ENCODE measurements at regions of chr16 and their contacts with region 1.

Region 1: DNA sequence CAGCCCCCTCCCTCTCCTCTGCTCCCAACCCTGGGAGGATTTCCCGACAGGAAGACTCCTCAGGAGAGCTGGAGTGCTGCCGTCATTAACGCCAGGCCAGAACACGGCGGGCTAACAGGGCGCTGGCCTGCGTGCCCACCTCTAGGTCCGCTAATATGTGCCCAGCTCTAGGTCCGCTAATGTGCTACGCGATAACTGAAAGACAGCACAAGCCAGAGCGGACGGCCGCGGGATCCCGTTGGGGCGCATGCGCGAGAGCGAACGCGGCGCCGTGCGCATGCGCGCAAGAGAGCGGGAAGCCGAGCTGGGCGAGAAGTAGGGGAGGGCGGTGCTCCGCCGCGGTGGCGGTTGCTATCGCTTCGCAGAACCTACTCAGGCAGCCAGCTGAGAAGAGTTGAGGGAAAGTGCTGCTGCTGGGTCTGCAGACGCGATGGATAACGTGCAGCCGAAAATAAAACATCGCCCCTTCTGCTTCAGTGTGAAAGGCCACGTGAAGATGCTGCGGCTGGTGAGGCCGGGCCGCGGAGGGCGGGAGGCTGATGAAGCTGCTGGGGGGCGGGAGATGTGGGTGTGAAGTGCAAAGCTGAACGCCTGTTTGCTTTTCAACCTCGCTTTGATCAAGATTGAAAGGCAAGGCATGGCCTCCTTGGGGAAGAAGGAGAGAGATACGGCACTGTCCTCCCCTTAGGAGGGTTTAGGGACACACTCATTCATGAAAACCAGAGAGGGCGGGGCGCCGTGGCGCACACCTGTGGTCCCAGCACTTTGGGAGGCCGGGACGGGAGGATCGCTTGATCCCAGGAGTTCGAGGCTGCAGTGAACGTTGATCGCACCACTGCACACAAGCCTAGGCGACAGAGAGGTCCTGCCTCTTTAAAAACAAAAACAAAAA is at the start of gene CKLF:
- DNase-seq: peak; percentile 89 to 94 (median 92)
- H3K4me3 ChIP-seq: peak within 1 kb of the TSS; percentile 19 to 76
- H3K4me3 Mint-ChIP-seq: peak within 1 kb of the TSS; percentile 94 to 99 (median 97)
- H3K27ac ChIP-seq: peak within 1 kb of the TSS; percentile 72
- H3K27ac Mint-ChIP-seq: peak within 1 kb of the TSS; percentile 94 to 98 (median 96)
- H3K4me1 ChIP-seq: peaks cover 89% of the 10 kb centered on the region
- H3K4me1 Mint-ChIP-seq: peaks cover 63 to 88% (median 74%) of the 10 kb centered on the region in 4 donors
- H3K27me3 ChIP-seq: no peaks in the 10 kb centered on the region
- H3K27me3 Mint-ChIP-seq: no peaks in the 10 kb centered on the region
- total RNA-seq, gene CKLF: 71.0 to 76.6 TPM

Region 2: GRCh38 chr16:66457888-66458287 is 94.6 kb before region 1 on chr16:
- CTCF ChIA-PET with region 1: no interaction called
- POLR2A ChIA-PET with region 1: no interaction called
- intact Hi-C with region 1: no loop called
- DNase-seq: no peak
- H3K4me3 ChIP-seq: no peak overlapping the region
- H3K4me3 Mint-ChIP-seq: no peak overlapping the region
- H3K27ac ChIP-seq: no peak overlapping the region
- H3K27ac Mint-ChIP-seq: no peak overlapping the region
- H3K4me1 ChIP-seq: no peaks in the 10 kb centered on the region
- H3K4me1 Mint-ChIP-seq: no peaks in the 10 kb centered on the region
- H3K27me3 ChIP-seq: no peaks in the 10 kb centered on the region
- H3K27me3 Mint-ChIP-seq: peaks cover 7 to 19% of the 10 kb centered on the region in 2 donors

Region 3: GRCh38 chr16:66474750-66475199 is 77.8 kb before region 1 on chr16:
- CTCF ChIA-PET with region 1: interaction called, 10 read pairs
- POLR2A ChIA-PET with region 1: interaction called, 10 read pairs
- intact Hi-C with region 1: loop called (anchors 1 kb)
- DNase-seq: peak; percentile 63 to 76 (median 70)
- H3K4me3 ChIP-seq: no peak overlapping the region
- H3K4me3 Mint-ChIP-seq: peak overlapping the region in 6 of 8 donors; percentile 9 to 63 (median 47)
- H3K27ac ChIP-seq: no peak overlapping the region
- H3K27ac Mint-ChIP-seq: peak overlapping the region; percentile 49 to 97 (median 81)
- H3K4me1 ChIP-seq: peaks cover 45% of the 10 kb centered on the region
- H3K4me1 Mint-ChIP-seq: peaks cover 21 to 49% (median 32%) of the 10 kb centered on the region in 4 donors
- H3K27me3 ChIP-seq: no peaks in the 10 kb centered on the region
- H3K27me3 Mint-ChIP-seq: peaks cover 0 to 1% of the 10 kb centered on the region in 2 donors

Region 4: DNA sequence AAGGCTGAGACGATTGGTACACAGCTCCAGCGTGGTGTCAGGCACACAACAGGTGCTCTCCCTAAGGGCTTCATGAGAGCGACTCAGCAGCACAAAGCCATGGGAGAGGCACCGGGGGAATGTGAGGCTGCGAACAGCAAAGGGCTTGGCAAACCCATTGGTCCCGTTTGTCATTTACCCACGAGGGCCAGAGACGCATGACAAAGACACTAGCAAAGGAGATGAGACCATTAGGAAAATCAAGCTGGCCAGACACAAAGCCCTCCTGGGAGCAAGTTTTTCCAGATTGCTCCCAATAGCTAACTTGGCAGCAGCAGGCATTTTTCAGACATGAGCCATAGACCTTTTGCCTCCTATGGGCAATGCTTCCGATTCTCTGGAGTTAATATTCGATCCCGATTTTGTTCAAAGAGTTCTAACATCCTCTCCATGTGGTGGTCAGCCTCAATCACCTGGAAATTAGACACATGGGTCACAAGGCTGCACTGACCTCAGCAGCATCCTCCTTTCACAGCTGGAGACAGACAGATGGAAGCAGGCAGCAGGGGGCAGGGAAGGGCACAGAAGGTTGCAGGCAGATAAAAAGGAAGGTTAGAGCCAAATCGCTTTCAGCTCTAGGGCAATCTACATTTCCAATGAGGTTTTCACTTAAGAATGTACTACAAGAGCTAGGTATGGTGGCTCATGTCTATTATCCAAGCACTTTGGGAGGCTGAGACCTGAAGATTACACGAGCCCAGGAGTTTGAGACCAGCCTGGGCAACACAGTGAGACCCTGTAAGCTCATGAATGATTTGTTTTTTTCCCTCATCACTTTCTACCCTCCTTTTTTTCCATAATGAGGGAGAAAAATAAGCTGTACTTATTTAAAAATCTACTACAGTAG is 40.7 kb before region 1 on chr16:
- CTCF ChIA-PET with region 1: interaction called, 36 read pairs
- POLR2A ChIA-PET with region 1: interaction called, 28 read pairs
- intact Hi-C with region 1: no loop called
- DNase-seq: no peak
- H3K4me3 ChIP-seq: no peak overlapping the region
- H3K4me3 Mint-ChIP-seq: peak overlapping the region in 1 of 8 donors; percentile 50
- H3K27ac ChIP-seq: no peak overlapping the region
- H3K27ac Mint-ChIP-seq: peak overlapping the region in 5 of 7 donors; percentile 13 to 79 (median 30)
- H3K4me1 ChIP-seq: peaks cover 39% of the 10 kb centered on the region
- H3K4me1 Mint-ChIP-seq: peaks cover 23 to 51% (median 32%) of the 10 kb centered on the region in 4 donors
- H3K27me3 ChIP-seq: no peaks in the 10 kb centered on the region
- H3K27me3 Mint-ChIP-seq: no peaks in the 10 kb centered on the region

Region 5: DNA sequence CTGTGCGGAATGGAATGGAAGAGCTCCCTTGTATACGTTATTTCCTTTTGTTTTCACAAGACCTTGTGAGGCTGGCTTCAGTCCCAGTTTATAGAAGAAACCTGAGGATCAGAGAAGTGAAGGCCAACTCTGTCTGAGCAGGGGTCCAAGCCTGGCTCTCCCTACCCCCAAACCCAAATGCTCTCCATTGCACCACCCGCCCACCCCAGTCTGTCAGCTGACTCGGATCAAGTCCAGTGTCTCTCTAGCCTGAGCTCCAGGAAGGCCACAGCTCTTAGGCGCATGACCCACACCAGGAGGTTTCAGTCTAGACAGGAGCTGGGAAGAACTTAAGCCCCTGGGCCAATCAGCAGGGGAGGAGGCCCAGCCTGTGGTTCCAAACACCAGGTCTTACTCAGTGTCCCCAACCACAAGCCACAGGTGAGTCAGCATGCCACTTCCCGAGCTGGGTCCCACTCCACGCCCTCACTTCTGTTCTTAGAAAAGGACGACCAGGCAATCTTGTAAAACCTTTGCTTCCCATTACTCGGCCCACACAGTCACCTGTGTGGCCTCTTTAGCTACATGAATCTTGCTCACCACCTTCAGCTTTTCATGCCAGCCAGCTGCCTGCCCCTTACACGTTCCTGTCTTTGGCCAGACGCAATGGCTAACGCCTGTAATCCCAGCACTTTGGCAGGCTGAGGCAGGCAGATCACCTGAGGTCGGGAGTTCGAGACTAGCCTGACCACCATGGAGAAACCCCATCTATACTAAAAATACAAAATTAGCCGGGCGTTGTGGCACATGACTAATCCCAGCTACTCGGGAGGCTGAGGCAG is 30.4 kb before region 1 on chr16:
- CTCF ChIA-PET with region 1: interaction called, 72 read pairs
- POLR2A ChIA-PET with region 1: interaction called, 440 read pairs
- intact Hi-C with region 1: loop called (anchors 1 kb)
- DNase-seq: peak; percentile 71 to 96 (median 77)
- H3K4me3 ChIP-seq: peak overlapping the region; percentile 32 to 57
- H3K4me3 Mint-ChIP-seq: peak overlapping the region; percentile 73 to 86 (median 79)
- H3K27ac ChIP-seq: peak overlapping the region; percentile 51
- H3K27ac Mint-ChIP-seq: peak overlapping the region; percentile 89 to 98 (median 95)
- H3K4me1 ChIP-seq: peaks cover 82% of the 10 kb centered on the region
- H3K4me1 Mint-ChIP-seq: peaks cover 64 to 100% (median 82%) of the 10 kb centered on the region in 4 donors
- H3K27me3 ChIP-seq: no peaks in the 10 kb centered on the region
- H3K27me3 Mint-ChIP-seq: no peaks in the 10 kb centered on the region

Region 6: DNA sequence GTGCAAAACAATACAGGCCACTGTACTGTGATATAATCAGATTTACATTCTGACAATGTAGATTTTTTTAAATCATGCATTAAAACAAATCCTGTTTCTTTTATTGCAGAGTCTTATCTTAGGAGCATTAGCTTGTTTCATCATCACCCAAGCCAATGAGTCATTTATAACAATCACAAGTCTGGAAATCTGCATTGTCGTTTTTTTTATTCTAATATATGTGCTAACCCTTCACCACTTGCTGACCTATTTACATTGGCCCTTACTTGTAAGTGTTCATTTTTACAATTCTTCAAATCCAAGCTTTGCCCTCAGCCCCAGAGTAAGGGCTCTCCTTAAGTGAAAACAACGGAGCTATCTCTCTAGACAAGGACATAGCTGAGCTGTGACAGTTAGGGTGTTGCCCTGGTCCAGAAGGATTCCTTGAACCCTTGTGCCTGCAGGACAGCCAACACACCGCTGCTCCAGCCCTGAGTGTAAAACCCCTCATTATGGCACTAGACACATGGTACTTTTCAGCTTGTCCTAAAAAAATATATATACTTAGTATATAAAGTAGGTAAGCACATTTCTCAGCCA is 17.4 kb after region 1 on chr16:
- CTCF ChIA-PET with region 1: interaction called, 58 read pairs
- POLR2A ChIA-PET with region 1: interaction called, 76 read pairs
- intact Hi-C with region 1: loop called (anchors 2 kb)
- DNase-seq: no peak
- H3K4me3 ChIP-seq: no peak overlapping the region
- H3K4me3 Mint-ChIP-seq: no peak overlapping the region
- H3K27ac ChIP-seq: no peak overlapping the region
- H3K27ac Mint-ChIP-seq: peak overlapping the region in 2 of 7 donors; percentile 16 to 46
- H3K4me1 ChIP-seq: peaks cover 2% of the 10 kb centered on the region
- H3K4me1 Mint-ChIP-seq: peaks cover under 1 to 20% (median 10%) of the 10 kb centered on the region in 4 donors
- H3K27me3 ChIP-seq: no peaks in the 10 kb centered on the region
- H3K27me3 Mint-ChIP-seq: no peaks in the 10 kb centered on the region

Region 7: DNA sequence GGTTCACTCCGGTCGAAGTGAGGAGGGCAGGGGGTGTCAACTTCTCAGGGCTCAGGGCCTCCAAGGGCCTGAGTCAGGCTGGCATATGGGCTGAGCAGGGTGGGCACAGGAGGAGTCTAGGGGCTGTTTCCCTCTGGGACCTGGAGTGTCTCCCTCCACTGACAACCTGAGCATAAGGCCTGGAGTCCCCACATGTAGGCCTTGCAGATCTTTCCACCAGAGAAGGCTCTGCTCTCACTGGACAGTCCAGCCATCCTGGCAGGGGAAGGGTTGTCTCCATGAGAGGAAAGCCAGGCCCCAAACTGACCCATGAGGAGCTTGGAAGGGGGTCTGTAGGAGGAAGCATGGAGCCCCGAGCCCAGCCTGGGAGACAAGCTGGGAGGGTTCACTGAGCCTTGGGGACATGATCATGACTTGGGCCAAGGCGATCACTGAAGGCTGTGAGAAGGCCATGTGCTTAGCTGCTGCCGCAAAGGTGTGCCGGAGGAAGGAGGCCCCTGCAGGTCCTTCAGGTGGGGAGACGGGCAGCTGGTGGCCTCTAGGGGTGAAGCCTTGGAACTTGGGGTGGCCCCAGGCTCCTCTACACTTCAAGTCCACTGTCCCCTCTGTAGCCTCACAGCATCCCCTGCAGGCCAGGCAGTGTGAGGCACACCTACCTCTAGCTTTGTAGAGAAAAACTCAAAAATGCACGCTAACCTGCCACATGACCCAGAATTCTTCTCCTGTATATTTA is 36.6 kb after region 1 on chr16:
- CTCF ChIA-PET with region 1: interaction called, 8 read pairs
- POLR2A ChIA-PET with region 1: interaction called, 8 read pairs
- intact Hi-C with region 1: loop called (anchors 5 kb)
- DNase-seq: peak; percentile 64 to 74 (median 70)
- H3K4me3 ChIP-seq: no peak overlapping the region
- H3K4me3 Mint-ChIP-seq: peak overlapping the region; percentile 80 to 94 (median 87)
- H3K27ac ChIP-seq: no peak overlapping the region
- H3K27ac Mint-ChIP-seq: peak overlapping the region; percentile 48 to 96 (median 77)
- H3K4me1 ChIP-seq: peaks cover 20% of the 10 kb centered on the region
- H3K4me1 Mint-ChIP-seq: peaks cover 13 to 23% (median 19%) of the 10 kb centered on the region in 4 donors
- H3K27me3 ChIP-seq: no peaks in the 10 kb centered on the region
- H3K27me3 Mint-ChIP-seq: no peaks in the 10 kb centered on the region

Region 8: GRCh38 chr16:66660422-66661209 is 108.1 kb after region 1 on chr16:
- CTCF ChIA-PET with region 1: no interaction called
- POLR2A ChIA-PET with region 1: no interaction called
- intact Hi-C with region 1: no loop called
- DNase-seq: no peak
- H3K4me3 ChIP-seq: no peak overlapping the region
- H3K4me3 Mint-ChIP-seq: no peak overlapping the region
- H3K27ac ChIP-seq: no peak overlapping the region
- H3K27ac Mint-ChIP-seq: peak overlapping the region in 1 of 7 donors; percentile 4
- H3K4me1 ChIP-seq: no peaks in the 10 kb centered on the region
- H3K4me1 Mint-ChIP-seq: no peaks in the 10 kb centered on the region
- H3K27me3 ChIP-seq: no peaks in the 10 kb centered on the region
- H3K27me3 Mint-ChIP-seq: peaks cover 0 to 12% of the 10 kb centered on the region in 2 donors